ENCODE measurements at regions of chr9 and their contacts with region 1.

Region 1: GRCh38 chr9:27276193-27277030 is 20.5 kb downstream of the EQTN start:
- DNase-seq: no peak
- H3K4me3 ChIP-seq: no peak overlapping the region
- H3K27ac ChIP-seq: no peak overlapping the region
- H3K4me1 ChIP-seq: no peaks in the 10 kb centered on the region
- H3K27me3 ChIP-seq: no peaks in the 10 kb centered on the region
- CTCF ChIP-seq: peak; percentile 65 to 67 (median 66)
- EP300 ChIP-seq: no peak
- POLR2A ChIP-seq: no peak

Region 2: GRCh38 chr9:27033823-27034403 is 242.5 kb before region 1 on chr9:
- intact Hi-C with region 1: loop called in 1 of 4 experiments (anchors 10 kb)
- DNase-seq: peak in 4 of 5 donors; percentile 18 to 68 (median 45)
- H3K4me3 ChIP-seq: no peak overlapping the region
- H3K27ac ChIP-seq: no peak overlapping the region
- H3K4me1 ChIP-seq: no peaks in the 10 kb centered on the region
- H3K27me3 ChIP-seq: no peaks in the 10 kb centered on the region
- CTCF ChIP-seq: peak; percentile 16 to 74 (median 68)
- EP300 ChIP-seq: no peak
- POLR2A ChIP-seq: no peak

Region 3: DNA sequence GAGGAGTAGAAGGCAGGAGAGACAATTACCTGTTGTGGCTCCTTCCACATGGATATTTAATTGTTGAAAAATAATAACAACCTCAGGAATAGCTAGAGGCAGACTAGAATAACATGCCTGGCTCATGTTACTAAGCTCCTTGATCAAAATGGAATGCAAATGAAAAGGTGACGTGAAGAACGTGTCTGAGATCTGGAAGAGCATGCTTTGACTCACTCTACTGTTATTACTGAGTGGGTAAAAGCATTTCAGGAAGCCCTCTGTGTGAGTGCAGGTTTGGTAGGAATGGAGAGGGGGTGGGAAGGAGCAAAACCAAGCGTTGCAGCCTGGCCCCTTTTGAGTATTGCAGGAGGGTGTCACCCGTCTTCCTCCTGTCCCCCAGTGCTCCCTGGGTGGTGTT is 64.2 kb before region 1 on chr9:
- intact Hi-C with region 1: no loop called
- DNase-seq: no peak
- H3K4me3 ChIP-seq: no peak overlapping the region
- H3K27ac ChIP-seq: no peak overlapping the region
- H3K4me1 ChIP-seq: no peaks in the 10 kb centered on the region
- H3K27me3 ChIP-seq: no peaks in the 10 kb centered on the region
- CTCF ChIP-seq: no peak
- EP300 ChIP-seq: no peak
- POLR2A ChIP-seq: no peak

Measured in ovary (tissue), 10 donors.